ENCODE measurements at regions of chr21 and their contacts with region 1.

Region 1: GRCh38 chr21:22791986-22792560 is 1793.9 kb downstream of the NCAM2 start:
- DNase-seq: no peak
- ATAC-seq: no peak
- H3K4me3 Mint-ChIP-seq: no peak overlapping the region
- H3K27ac Mint-ChIP-seq: no peak overlapping the region
- H3K4me1 Mint-ChIP-seq: no peaks in the 10 kb centered on the region
- H3K27me3 Mint-ChIP-seq: no peaks in the 10 kb centered on the region
- CTCF ChIP-seq: peak; percentile 94

Region 2: DNA sequence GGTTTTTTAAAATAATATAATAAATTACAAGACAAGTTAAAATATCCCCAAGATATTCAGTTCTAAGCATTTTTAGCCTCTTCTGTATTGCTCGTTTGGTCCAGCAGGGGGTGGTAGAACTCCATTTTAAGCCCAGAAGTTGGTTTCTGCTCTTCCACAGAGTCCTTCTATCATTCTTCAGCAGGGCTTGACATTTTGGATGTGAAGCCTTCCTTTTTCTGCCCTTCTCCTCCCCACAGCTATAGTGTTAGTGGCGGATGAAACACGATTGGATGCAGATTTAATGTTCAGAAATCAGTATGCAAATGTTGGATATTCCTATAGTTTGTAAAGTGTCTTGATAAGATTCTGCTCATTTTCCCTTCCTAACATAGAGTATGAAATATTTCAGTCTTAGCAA is 1792.4 kb before region 1 on chr21:
- CTCF ChIA-PET with region 1: interaction called, 4 read pairs
- POLR2A ChIA-PET with region 1: no interaction called
- intact Hi-C with region 1: loop called (anchors 1 kb)
- DNase-seq: no peak
- ATAC-seq: no peak
- H3K4me3 Mint-ChIP-seq: no peak overlapping the region
- H3K27ac Mint-ChIP-seq: no peak overlapping the region
- H3K4me1 Mint-ChIP-seq: peaks cover 16% of the 10 kb centered on the region
- H3K27me3 Mint-ChIP-seq: peaks cover 21% of the 10 kb centered on the region
- CTCF ChIP-seq: no peak

Region 3: DNA sequence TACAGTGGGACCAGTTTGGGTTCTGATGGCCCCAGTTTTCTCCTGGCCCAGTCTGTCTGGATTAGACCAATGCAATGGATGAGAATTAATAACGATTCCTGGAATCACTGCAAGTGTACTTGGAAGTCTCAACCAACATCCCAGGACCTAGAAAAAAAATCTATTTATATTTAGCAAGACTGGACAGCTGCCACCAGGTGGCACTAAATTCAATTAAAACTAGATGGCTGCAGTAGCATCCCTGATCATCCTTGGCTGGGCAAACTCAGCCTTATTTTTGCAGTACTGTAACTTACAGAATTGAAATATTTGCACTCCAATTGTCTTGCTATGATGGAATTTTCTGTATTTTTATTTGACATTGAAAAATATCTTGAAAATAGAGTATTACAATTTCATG is 1628.2 kb before region 1 on chr21:
- CTCF ChIA-PET with region 1: interaction called, 3 read pairs
- POLR2A ChIA-PET with region 1: no interaction called
- intact Hi-C with region 1: loop called (anchors 1 kb)
- DNase-seq: no peak
- ATAC-seq: no peak
- H3K4me3 Mint-ChIP-seq: no peak overlapping the region
- H3K27ac Mint-ChIP-seq: no peak overlapping the region
- H3K4me1 Mint-ChIP-seq: peaks cover 7% of the 10 kb centered on the region
- H3K27me3 Mint-ChIP-seq: no peaks in the 10 kb centered on the region
- CTCF ChIP-seq: no peak

Region 4: DNA sequence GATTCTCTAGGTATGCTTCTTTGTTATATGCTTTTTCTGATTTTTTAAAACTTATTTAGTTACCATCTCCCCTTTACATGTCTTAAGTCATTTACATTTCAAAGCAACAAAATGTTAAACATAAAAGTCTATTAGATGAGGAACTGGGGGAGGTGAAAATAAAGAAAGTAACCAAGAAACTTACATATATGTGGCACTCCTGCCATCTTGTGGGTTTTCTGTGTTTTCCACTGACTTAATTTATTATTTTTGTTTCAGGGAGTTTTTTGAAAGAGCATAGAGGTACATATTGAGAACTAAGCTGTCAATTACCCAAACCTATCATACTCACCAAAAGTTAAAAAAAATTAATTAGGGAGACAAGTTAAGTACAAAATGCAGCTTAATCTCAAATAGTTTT is 1284.1 kb after region 1 on chr21:
- CTCF ChIA-PET with region 1: no interaction called
- POLR2A ChIA-PET with region 1: no interaction called
- intact Hi-C with region 1: loop called (anchors 5 kb)
- DNase-seq: no peak
- ATAC-seq: no peak
- H3K4me3 Mint-ChIP-seq: no peak overlapping the region
- H3K27ac Mint-ChIP-seq: no peak overlapping the region
- H3K4me1 Mint-ChIP-seq: peaks cover 17% of the 10 kb centered on the region
- H3K27me3 Mint-ChIP-seq: no peaks in the 10 kb centered on the region
- CTCF ChIP-seq: no peak

Measured in activated B cell treated with CpG ODN at 0.5 μM for 24 hours (primary cell).